ENCODE measurements at regions of chr10 and their contacts with region 1.

Region 1: DNA sequence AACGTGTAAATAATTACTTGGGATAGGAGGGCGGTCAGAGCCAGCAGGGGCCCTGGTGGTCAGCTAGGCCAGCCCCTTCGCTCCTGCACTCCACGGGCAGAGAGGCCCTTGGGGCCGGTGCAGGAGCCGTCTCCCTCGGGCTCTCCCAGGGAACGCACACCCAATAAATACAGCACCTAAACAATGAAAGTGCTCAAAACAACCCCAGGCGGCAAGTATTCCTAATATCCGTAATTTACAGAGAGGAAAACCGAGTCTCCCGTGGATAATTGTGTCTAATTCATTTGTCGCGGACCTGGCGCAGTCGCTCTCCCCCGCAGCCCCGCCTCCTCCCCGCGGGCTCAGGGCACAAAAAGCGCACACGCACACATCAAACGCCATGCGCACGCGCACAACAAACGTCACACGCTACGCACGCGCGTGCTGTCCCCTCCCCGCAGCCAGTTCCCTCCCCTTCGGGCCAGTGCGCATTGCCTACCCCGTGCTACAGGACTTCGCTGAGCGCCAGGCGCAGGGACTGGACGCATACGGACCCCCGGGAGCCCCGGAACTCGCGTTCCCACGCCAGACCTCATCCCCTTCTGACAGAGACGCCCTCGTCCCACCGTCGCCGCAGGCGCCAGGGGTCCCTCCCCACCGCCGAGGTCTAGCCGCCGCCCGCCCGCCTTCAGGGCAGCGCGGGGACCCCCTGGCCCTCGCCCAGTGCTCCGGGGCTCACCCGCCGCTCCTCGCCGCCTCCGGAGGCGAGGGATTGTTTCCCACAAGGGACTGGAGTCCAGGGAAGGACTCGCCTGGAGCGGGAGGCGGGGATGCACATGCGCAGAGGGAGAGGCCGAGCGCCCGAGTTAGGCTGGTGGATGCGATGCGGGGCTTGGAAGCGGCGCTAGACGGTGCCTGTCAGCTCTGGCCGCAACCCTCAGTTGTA is at the start of gene ZNF248:
- DNase-seq: peak; percentile 100
- ATAC-seq: peak; percentile 85
- H3K4me3 ChIP-seq: peak within 1 kb of the TSS; percentile 74
- H3K27ac ChIP-seq: peak within 1 kb of the TSS; percentile 85
- H3K4me1 ChIP-seq: peaks cover 49% of the 10 kb centered on the region
- H3K27me3 ChIP-seq: no peaks in the 10 kb centered on the region
- CTCF ChIP-seq: 0 out of 2 replicates have a peak, but pooled peaks have one; percentile 29
- total RNA-seq, gene ZNF248: 112 and 115 TPM in 2 replicates

Region 2: DNA sequence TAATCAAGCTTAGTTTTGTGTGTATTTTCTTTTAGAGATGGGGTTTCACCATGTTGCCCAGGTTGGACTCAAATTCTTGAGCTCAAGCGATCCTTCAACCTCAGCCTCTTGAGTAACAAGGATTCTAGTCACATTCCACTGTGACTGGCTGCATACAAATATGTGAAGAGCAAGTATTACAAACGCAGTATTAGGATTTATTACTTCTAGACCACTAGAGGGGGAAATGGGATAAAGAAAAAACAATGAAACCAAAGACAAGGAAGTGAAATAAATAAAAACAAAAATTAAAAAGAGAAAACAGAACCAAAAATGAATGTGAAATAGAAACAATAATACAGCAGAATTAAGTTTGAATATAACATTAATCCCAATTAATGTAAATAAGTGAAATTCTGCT is 423.5 kb before region 1 on chr10:
- CTCF ChIA-PET with region 1: no interaction called
- POLR2A ChIA-PET with region 1: no interaction called
- intact Hi-C with region 1: loop called (anchors 10 kb)
- DNase-seq: peak; percentile 87
- ATAC-seq: peak; percentile 90
- H3K4me3 ChIP-seq: no peak overlapping the region
- H3K27ac ChIP-seq: no peak overlapping the region
- H3K4me1 ChIP-seq: no peaks in the 10 kb centered on the region
- H3K27me3 ChIP-seq: no peaks in the 10 kb centered on the region
- CTCF ChIP-seq: peak; percentile 98

Region 3: DNA sequence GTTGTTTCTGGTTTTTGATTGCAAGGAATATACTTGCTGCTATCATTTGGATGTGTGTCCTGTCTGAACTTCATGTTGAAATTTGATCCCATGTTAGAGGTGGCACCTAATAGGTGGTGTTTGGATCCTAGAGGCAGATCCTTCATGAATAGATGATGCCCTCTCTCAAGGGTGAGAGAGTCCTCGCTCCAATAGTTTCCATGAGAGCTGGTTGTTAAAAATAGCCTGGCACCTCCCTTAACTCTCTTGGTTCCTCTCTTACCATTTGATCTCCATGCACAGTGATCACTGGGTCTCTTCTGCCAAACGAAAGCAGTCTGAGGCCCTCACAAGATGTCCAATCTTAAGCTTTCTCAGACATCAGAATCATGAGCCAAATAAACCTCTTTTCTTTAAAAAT is 48.8 kb after region 1 on chr10:
- CTCF ChIA-PET with region 1: no interaction called
- POLR2A ChIA-PET with region 1: no interaction called
- intact Hi-C with region 1: loop called (anchors 10 kb)
- DNase-seq: no peak
- ATAC-seq: no peak
- H3K4me3 ChIP-seq: no peak overlapping the region
- H3K27ac ChIP-seq: no peak overlapping the region
- H3K4me1 ChIP-seq: 0 out of 2 replicates have a peak, but pooled peaks cover 3% of the 10 kb centered on the region
- H3K27me3 ChIP-seq: no peaks in the 10 kb centered on the region
- CTCF ChIP-seq: no peak

Region 4: DNA sequence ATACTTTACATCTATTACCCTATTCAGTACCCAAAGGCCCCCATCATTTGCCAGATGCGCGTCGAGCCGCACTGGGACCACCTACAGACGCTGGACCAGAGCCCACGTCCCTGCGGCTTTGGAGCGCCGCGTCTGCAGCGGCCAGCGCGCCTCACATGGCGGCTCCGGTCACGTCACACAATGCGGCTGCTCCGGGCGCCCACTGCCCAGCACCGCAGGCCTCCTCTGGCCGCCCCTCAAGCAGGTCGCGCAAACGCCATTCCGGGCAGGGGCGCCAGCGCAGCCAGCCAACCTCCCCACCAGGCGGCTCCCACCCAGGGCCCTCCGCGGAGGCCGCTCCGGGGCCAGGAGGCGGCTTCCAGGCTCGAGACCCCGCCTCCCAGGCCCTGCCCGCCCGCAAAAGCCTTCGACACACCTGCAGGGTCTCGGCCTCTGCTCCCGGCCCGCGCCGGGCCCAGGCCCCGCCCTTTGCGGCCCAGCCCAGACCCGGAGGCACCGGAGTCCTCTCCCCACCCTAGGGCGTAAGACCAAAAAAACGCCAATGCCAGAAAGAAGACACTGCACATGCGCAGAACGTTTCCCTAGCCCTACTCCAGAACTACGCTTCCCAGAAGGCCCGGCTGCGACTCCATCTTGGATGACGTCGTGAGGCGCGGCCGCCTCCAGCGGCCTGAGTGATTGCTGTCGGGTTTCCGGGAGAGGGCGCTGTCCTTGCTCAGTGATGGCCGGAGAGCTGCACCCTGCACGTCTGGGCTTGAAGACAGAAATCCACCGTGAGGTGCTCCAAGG is 118.7 kb after region 1 on chr10 and contains the start of gene ZNF25:
- CTCF ChIA-PET with region 1: no interaction called
- POLR2A ChIA-PET with region 1: no interaction called
- intact Hi-C with region 1: loop called (anchors 1 kb)
- DNase-seq: peak; percentile 100
- ATAC-seq: peak; percentile 94
- H3K4me3 ChIP-seq: peak within 1 kb of the TSS; percentile 83
- H3K27ac ChIP-seq: peak within 1 kb of the TSS; percentile 59
- H3K4me1 ChIP-seq: peaks cover 11% of the 10 kb centered on the region; the same call in 1 of the 2 replicates
- H3K27me3 ChIP-seq: no peaks in the 10 kb centered on the region
- CTCF ChIP-seq: peak; percentile 97
- total RNA-seq, gene ZNF25: 2.4 and 3.9 TPM in 2 replicates

Region 5: DNA sequence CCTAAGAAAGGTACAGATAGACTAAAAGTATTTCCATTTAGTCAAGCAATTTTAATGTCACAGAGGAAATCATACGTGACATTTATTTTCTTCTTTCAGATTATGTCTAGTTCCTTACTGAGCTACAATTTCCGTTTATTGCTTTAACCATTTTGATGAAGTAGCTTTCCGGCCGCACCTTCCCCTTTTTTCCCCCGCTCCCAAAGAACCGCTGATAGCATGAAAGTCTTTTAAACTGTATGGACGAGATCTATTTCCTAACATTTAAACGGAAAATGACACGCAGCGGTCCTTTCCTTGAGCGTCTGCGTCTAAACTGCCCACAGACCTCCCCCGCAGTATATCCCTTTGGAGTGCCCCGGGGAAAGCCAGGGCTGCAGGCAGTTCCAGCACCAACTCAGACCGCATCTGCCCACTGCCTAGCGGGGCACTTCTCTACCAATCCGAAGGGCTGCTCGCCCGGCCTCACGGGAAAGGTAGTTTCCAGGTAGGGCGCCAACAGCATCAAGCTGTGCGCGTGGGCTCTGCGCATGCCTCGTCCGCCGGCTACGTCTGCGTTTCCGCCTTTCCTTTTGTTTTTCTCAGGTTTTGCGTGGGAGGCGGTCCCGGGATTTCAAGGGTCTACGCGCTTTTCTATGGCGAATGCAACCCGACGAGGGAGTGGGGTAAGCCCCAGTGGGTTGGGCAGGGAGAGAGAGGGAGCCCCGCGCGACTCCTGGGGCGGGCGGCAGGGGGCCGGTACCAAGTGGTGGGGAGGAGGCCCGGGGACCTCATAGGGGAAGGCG is 152.8 kb after region 1 on chr10 and contains the start of gene ZNF33A:
- CTCF ChIA-PET with region 1: no interaction called
- POLR2A ChIA-PET with region 1: no interaction called
- intact Hi-C with region 1: loop called (anchors 1 kb)
- DNase-seq: peak; percentile 98
- ATAC-seq: peak; percentile 93
- H3K4me3 ChIP-seq: peak within 1 kb of the TSS; percentile 71
- H3K27ac ChIP-seq: peak within 1 kb of the TSS; percentile 89
- H3K4me1 ChIP-seq: peaks cover 18% of the 10 kb centered on the region
- H3K27me3 ChIP-seq: no peaks in the 10 kb centered on the region
- CTCF ChIP-seq: no peak; the same call in 1 of the 2 replicates
- total RNA-seq, gene ZNF33A: 18.0 and 21.1 TPM in 2 replicates

Region 6: GRCh38 chr10:38094158-38094920 is 236.8 kb after region 1 on chr10 and contains the start of gene ZNF37A:
- CTCF ChIA-PET with region 1: no interaction called
- POLR2A ChIA-PET with region 1: no interaction called
- intact Hi-C with region 1: loop called (anchors 5 kb)
- DNase-seq: peak; percentile 98
- ATAC-seq: peak; percentile 98
- H3K4me3 ChIP-seq: peak within 1 kb of the TSS; percentile 91
- H3K27ac ChIP-seq: no peak within 1 kb of the TSS; the same call in 1 of the 2 replicates
- H3K4me1 ChIP-seq: peaks cover 13% of the 10 kb centered on the region
- H3K27me3 ChIP-seq: no peaks in the 10 kb centered on the region
- CTCF ChIP-seq: no peak
- total RNA-seq, gene ZNF37A: 19.7 and 25.7 TPM in 2 replicates

Measured in PC-3 (cell line).